Posterior cingulate gyrus (tissue), 11 donors: ENCODE measurements at regions of chr10 and their contacts with region 1.

Region 1: DNA sequence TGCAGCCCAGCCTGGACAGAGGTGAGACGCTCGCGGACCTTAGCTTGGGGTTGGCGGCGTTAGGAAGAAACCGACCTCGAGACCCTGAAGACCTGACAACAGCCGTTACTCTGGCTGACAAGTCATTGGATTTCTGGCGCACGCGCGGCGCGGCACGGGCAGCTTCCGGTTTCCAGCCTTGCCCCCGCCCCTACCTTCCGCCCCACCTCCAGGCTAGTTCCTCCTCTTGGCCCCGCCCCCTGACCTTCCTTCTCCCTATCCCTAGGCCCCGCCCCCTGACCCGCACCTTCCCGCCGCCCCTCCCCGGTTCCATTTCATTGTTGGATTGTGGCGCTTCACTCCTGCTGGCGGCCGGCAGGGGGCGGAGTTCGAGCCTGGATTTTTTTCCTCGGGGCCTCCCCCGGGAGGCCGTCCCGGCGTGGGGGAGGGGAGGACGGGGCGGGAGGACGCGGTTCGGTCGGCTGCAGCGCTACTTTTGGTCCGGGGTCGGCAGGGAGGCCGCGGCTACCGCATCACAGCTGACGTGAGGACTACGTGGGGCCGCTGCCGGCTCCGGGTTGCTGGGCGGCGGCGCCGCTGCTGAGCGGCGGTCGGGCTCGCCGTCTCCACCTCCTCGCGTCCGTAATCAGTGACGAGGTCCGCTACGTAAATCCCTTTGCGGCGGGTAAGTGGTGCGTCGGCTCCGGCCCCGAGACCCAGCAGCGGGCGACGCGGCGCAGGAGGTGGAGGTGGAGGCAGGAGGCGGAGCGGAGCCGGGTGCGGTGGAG is at the start of gene CREM:
- DNase-seq: peak; percentile 91 to 99 (median 94)

Region 2: GRCh38 chr10:34753014-34753757 is 373.5 kb before region 1 on chr10:
- intact Hi-C with region 1: no loop called
- DNase-seq: no peak

Region 3: DNA sequence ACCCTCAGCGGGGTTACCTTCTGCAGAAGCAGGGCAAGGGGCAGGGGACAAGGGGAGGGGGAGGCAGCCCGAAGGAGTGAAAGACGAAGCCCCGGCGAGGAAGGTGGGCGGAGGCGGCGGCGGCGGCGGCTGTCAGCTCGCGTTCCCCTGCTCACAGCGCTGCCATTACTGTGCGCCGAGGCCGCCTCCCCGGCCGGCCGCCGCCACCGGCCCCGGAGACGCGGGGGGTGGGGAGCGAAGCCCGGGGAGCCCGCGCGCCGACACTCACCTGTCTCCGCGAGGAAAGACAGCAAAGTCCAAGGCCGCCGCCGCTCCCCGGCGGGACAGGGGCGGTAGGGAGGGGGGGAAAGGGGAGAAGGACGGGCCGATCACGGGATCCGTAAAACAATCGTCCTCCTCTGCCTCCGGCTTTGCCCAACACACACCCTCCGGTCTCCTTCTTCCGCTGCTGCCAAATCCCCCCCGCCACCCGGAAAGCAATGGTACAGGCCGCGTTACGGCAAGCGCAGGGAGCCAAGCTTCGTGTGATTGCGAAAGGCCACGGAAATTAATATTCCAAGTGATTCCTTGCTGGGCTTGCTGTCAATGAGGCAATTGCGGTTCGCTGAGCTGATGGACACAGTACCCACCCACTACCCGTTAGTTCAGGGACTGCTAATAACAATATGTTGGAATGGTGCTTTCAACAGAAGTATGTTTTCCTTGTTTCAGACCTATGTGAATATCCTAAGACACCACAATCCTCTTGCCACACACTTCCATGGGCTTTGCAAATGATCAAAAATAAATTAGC is 36.4 kb before region 1 on chr10 and contains the start of gene CUL2:
- intact Hi-C with region 1: loop called (anchors 2 kb)
- DNase-seq: peak; percentile 83 to 99 (median 94)

Region 4: DNA sequence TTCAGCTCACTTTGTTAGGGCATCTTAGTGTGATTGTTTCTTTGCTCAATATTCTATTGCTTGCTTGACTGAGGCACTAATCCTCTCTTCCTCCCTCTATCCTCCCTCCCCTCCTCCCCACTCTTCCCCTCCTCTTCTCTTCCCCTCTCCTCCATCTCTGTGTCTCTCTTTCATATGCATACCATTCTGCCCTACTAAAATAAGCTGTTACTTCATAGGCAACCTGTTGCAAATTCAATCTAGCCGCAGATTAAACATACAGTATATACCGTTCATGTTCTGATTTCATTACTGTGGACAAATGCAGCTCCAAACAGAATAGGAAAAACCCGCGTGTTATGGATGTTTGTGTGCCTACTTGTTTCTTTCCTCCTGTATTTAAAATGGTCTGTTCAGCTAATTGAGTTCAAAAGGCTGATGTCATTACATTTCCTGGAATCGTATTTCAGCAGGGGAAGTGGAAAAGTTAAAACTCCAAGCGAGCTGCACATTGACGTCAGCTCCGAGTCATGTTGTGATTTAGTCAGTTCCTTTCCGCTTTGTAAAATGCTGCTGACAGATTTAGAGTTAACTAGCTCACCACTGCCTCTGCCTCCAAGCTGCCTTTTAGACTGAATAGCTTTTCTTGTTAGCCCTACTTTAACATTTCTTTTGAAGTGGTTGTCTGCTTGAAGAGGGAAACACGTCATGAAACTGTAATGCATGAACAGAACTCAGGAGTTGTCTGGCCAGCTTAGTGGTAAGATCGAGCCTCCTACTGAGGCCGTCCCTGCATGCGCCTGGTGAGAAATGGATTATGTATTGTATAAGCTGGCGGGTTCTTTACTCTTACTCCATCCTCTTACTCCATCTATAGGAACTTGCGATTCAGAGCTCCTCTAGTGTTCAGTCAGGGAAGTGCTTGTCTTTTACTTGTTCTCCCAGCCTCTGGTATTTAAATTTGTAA is 68.9 kb after region 1 on chr10:
- intact Hi-C with region 1: loop called (anchors 2 kb)
- DNase-seq: peak in 1 of 10 donors; percentile 26

Region 5: GRCh38 chr10:35336084-35336831 is 209.5 kb after region 1 on chr10 and contains the start of gene CCNY:
- intact Hi-C with region 1: loop called (anchors 10 kb)
- DNase-seq: peak; percentile 64 to 95 (median 76)

Region 6: GRCh38 chr10:35554461-35555056 is 427.8 kb after region 1 on chr10:
- intact Hi-C with region 1: no loop called
- DNase-seq: no peak

Region 7: DNA sequence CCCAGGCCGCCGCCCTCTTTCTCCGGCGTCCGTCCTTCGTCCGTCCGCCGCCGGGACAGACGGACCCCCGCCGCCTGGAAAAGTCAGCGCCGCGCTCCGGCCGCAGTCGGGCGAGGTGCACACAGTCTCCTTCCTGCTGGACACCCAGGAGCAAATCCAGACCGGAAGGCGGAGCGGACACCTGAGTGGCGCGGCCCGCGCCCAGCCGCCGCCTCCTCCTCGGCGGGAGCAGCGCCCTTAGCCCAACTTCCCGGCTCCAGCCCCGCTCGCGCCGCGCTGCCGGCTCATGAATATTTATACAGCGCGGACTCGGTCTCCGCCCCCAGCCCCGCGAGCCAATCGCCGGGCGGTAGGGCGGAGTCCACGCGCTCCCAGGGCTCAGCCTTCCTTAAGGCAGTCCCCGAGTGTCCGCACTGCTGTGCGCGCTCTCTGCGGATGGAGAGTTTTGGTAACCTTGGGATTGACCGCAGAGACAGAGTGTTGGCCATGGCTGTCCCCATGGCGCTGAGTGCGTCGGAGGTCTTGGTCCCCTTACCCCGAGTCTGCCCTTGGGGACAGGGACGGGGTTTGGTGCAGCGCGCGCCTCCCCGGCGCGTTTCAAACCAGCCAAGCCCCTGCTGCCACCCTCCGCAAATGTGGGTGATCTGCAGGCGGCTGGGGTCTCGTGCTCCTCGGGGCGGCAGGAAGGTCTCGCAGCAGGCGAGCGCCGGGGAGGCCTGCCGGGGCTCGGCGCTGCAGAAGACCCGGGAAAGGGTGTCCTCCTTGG is 515.5 kb after region 1 on chr10 and contains the start of gene FZD8:
- intact Hi-C with region 1: loop called (anchors 5 kb)
- DNase-seq: peak; percentile 83 to 98 (median 90)